Activated naive CD4-positive, alpha-beta T cell treated with anti-CD3 and anti-CD28 coated beads for 36 hours (primary cell): ENCODE measurements at regions of chr1 and their contacts with region 1.

Region 1: GRCh38 chr1:24536391-24536840 is 19.5 kb upstream of the NCMAP start:
- DNase-seq: peak; percentile 84
- H3K4me3 Mint-ChIP-seq: peak overlapping the region; percentile 67
- H3K27ac Mint-ChIP-seq: peak overlapping the region; percentile 97
- H3K4me1 Mint-ChIP-seq: peaks cover 84% of the 10 kb centered on the region
- H3K27me3 Mint-ChIP-seq: no peaks in the 10 kb centered on the region

Region 2: DNA sequence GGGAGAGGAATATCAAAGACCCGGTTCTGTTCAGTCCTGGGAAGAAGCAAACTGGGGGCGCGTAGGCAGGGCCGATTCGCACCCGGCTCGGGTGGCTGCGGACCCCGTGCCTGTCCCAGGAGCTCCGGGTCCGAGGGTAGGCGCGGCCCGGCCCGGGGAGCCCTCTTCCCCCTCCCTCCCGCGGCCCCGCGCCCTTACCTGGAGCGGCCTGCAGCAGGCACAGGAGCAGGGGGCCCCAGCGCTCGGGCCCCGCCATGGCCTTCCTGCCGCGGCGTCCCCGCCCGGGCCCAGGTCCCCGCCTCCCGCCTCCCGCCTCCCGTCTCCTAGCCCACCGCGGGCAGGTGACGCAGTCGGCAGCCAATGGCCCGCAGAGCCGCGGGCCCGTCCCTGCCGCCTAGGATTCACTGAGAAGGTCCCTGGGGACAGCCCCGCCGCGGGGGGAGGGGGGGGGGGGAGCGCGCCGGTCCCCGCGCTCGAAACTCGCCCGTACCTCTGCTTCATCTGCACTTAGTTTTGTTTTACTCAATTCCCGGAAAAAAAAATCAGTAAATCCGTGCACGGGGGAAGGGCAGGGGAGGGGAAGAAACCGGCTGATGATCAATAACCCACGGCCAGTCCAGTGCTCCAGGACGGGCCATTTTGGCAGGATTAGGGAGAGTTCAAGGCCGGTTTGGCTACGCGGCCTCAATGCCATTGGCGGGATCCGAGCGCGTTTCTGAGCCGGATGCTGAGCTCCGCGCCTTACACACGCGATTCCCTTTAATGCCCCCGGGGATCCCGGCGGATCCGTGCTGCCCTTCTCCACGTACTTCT is 349.2 kb before region 1 on chr1 and contains the start of gene IFNLR1:
- CTCF ChIA-PET with region 1: interaction called, 3 read pairs
- intact Hi-C with region 1: loop called (anchors 2 kb)
- DNase-seq: peak; percentile 92
- H3K4me3 Mint-ChIP-seq: peak within 1 kb of the TSS; percentile 79
- H3K27ac Mint-ChIP-seq: peak within 1 kb of the TSS; percentile 18
- H3K4me1 Mint-ChIP-seq: peaks cover 50% of the 10 kb centered on the region
- H3K27me3 Mint-ChIP-seq: peaks cover 3% of the 10 kb centered on the region
- total RNA-seq, gene IFNLR1: 4.3 to 4.6 TPM

Region 3: DNA sequence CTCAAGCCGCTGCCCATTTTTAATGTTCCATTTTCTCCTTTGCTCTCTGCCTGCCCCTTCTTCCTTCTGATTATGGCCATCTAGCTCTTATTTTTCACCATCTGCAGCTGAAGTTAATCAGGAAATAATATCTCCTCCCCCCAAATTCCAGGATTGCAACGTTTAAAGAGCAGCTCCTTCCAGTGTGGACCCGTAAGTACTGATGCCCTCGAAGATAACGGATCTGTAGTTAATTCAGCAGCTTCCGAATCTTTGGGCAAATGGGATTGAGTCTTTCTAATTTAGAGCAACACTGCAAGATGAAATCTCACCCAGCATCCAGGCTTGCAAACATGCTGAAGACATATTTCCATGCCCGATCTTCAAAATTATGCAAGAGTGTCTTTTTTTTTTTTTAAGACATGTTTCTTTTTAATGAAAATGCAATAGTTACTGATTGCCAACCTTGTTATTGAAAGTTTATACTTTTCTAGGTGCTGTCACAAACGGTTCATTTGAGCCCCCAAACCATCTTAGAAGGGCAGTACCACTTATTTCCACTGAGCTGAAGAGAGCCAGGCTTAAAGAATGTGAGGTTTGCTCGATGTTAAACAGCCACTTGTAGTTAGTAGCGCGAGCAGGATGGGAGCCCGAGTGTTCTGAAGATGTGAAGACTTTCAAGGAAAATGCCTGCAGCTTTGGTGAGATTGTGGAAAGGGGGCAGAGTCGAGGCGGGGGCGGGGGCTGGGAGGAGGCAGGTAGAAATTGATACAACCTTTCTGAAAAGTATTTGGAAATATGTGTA is 44.6 kb before region 1 on chr1:
- CTCF ChIA-PET with region 1: interaction called, 6 read pairs
- intact Hi-C with region 1: loop called (anchors 1 kb)
- DNase-seq: no peak
- H3K4me3 Mint-ChIP-seq: no peak overlapping the region
- H3K27ac Mint-ChIP-seq: no peak overlapping the region
- H3K4me1 Mint-ChIP-seq: peaks cover 50% of the 10 kb centered on the region
- H3K27me3 Mint-ChIP-seq: no peaks in the 10 kb centered on the region

Region 4: DNA sequence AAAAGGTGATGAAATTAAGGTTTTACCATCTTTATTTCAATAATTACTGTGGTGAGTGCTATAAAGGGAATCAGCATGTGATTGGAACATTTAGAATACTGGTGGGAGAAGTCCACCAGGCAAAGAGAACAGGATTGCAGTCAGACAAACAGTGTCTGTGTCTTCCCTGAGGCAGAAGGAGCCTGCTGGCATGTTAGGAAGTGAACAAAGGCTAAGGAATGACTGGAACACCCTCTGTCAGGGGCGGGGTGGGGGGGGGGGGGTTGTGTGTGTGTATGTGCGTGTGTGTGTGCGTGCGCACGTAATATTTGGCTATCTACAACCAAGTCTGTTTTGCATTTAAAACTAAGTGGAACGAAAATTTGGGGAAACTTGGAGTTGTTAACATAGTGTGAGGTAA is 136.9 kb after region 1 on chr1:
- CTCF ChIA-PET with region 1: no interaction called
- intact Hi-C with region 1: no loop called
- DNase-seq: no peak
- H3K4me3 Mint-ChIP-seq: no peak overlapping the region
- H3K27ac Mint-ChIP-seq: no peak overlapping the region
- H3K4me1 Mint-ChIP-seq: no peaks in the 10 kb centered on the region
- H3K27me3 Mint-ChIP-seq: no peaks in the 10 kb centered on the region

Region 5: GRCh38 chr1:24727501-24728216 is 191.2 kb after region 1 on chr1:
- CTCF ChIA-PET with region 1: no interaction called
- intact Hi-C with region 1: no loop called
- DNase-seq: peak; percentile 41
- H3K4me3 Mint-ChIP-seq: no peak overlapping the region
- H3K27ac Mint-ChIP-seq: no peak overlapping the region
- H3K4me1 Mint-ChIP-seq: peaks cover 8% of the 10 kb centered on the region
- H3K27me3 Mint-ChIP-seq: no peaks in the 10 kb centered on the region

Region 6: DNA sequence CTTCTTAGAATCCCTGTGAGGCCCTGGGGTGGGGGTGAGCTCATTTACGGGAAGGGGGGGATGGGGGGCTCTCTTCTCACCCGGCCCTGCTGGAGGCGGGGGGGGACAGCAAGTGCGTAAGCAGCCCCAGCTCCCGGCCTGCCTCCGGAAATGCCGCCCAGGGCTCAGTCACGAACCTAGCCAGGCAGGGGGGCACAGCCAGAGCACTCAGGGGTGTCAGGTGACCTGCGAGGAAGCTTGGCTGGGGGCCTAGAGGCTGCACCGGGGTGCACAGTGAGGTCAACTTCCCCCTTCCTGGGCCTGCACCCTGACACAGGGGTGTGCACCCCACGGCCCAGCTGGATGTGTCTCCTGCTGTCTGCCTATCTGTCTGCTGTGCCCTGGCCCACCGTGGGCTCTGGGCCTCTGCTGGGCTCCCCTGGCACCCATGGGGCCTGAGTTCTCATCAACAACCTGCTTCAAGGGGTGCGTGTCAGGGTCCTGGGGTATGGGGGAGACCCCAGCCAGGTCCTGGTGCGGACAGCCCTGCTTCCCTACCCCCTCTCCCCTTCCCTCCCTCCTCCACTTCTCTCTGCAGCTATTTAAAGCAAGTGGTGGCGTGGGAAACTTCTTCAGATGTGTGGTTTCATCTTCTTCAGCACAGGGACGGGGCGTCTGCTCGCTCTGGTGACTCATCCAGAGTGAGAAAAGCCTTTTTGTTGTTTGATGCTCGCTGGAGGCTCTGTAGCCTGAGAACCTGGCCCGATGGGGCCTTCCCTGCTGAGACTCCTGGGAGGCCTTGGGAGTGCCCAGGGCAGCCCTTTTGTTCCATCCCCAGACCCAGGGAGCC is 486.2 kb after region 1 on chr1:
- CTCF ChIA-PET with region 1: no interaction called
- intact Hi-C with region 1: no loop called
- DNase-seq: peak; percentile 98
- H3K4me3 Mint-ChIP-seq: peak overlapping the region; percentile 71
- H3K27ac Mint-ChIP-seq: peak overlapping the region; percentile 96
- H3K4me1 Mint-ChIP-seq: peaks cover 86% of the 10 kb centered on the region
- H3K27me3 Mint-ChIP-seq: no peaks in the 10 kb centered on the region